Activated CD4-positive, alpha-beta T cell treated with anti-CD3 and anti-CD28 coated beads, Interleukin-2, amount 10 ng/mL, durations not matched to agents 24 days and 14 days (primary cell): ENCODE measurements at regions of chr10 and their contacts with region 1.

Region 1: GRCh38 chr10:63166742-63167258 is 33.7 kb downstream of the NRBF2 start:
- DNase-seq: peak; percentile 82
- H3K4me3 Mint-ChIP-seq: no peak overlapping the region
- H3K27ac Mint-ChIP-seq: no peak overlapping the region
- H3K4me1 Mint-ChIP-seq: peaks cover 33% of the 10 kb centered on the region
- H3K27me3 Mint-ChIP-seq: no peaks in the 10 kb centered on the region

Region 2: DNA sequence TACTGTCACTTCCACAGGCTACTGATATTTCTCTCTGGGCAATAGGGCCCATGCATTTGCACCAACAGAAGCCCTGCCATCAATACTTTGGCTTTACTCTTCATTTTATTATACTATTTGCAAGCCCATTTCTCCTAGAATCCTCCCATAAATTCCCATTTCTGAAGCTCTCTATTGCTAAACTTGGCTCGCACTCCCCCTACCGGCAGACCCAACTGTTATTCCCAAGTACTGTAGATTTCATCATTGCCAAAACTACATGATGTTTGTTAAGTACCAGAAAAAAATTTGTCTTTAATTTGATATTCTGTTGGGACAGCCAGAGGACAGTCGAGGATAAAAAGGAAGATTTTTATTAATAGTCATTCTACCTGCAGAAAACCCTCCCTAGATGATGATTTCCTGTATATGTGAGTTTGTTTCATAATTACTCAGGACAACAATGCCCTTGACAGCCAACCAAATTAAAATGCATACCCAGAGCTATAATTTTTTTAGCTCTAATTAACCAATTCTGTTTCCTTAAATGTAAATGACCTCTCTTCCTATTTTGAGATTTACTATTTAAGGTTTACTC is 653.0 kb after region 1 on chr10:
- intact Hi-C with region 1: loop called (anchors 10 kb)
- DNase-seq: peak; percentile 60
- H3K4me3 Mint-ChIP-seq: no peak overlapping the region
- H3K27ac Mint-ChIP-seq: no peak overlapping the region
- H3K4me1 Mint-ChIP-seq: no peaks in the 10 kb centered on the region
- H3K27me3 Mint-ChIP-seq: peaks cover 6% of the 10 kb centered on the region